ENCODE measurements at regions of chr4 and their contacts with region 1.

Region 1: DNA sequence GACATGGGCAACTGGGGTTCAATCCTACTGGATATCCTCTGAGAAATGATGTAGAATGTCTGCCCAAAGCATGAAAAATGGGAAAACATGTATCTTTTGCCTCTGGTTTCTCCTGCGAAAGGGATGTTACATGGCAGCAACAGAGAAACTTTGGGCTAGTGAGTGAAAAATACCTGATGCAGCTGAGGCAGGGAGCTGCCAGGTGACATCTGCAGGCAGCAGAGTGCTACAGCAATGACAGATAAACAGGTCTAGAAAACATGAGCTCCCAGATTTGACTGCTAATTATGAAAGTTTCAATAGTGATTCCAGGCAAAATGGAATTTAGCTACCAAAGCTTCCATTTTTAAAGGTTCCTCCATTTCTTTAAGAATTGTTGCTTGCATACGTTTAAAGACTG is 4.8 kb upstream of the CXCL1 start:
- DNase-seq: peak; percentile 18
- H3K4me3 ChIP-seq: no peak overlapping the region
- H3K27ac ChIP-seq: no peak overlapping the region
- H3K4me1 ChIP-seq: peaks cover 8% of the 10 kb centered on the region
- H3K27me3 ChIP-seq: no peaks in the 10 kb centered on the region
- CTCF ChIP-seq: peak; percentile 10 to 31
- POLR2A ChIP-seq: no peak

Region 2: DNA sequence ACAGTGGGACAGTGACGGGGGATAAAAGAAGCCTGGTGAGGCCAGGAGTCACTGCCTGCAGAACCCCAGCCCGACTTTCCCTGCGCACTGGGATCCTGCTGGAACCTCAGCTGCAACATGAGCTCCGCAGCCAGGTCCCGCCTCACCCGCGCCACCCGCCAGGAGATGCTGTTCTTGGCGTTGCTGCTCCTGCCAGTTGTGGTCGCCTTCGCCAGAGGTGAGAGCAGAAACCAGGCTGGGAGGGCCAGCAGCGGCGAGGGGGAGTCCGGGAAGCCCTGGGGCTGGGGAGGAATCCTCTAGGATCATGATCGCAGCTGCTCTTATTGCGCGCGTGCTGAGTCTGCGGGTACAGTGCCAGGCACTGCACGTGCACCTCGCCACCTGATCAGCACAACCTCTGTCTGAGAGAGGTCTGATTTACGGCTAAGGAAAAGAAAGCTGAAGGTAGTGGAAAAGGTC is 11.1 kb before region 1 on chr4 and contains the start of gene PF4V1:
- CTCF ChIA-PET with region 1: interaction called, 15 read pairs
- POLR2A ChIA-PET with region 1: interaction called, 5 read pairs
- dilution Hi-C with region 1: no loop called
- intact Hi-C with region 1: no loop called
- DNase-seq: peak; percentile 13
- H3K4me3 ChIP-seq: peak within 1 kb of the TSS in 1 of 3 experiments; percentile 2
- H3K27ac ChIP-seq: no peak within 1 kb of the TSS
- H3K4me1 ChIP-seq: peaks cover 11% of the 10 kb centered on the region
- H3K27me3 ChIP-seq: no peaks in the 10 kb centered on the region
- CTCF ChIP-seq: peak; percentile 14 to 45
- POLR2A ChIP-seq: no peak
- total RNA-seq, gene PF4V1: not detected in 2 replicates

Region 3: GRCh38 chr4:73998040-73999011 is 134.0 kb after region 1 on chr4 and contains the start of gene CXCL5:
- CTCF ChIA-PET with region 1: no interaction called
- POLR2A ChIA-PET with region 1: no interaction called
- dilution Hi-C with region 1: no loop called
- intact Hi-C with region 1: no loop called
- DNase-seq: peak; percentile 41
- H3K4me3 ChIP-seq: peak within 1 kb of the TSS; percentile 13 to 44 (median 40)
- H3K27ac ChIP-seq: no peak within 1 kb of the TSS
- H3K4me1 ChIP-seq: peaks cover 10% of the 10 kb centered on the region
- H3K27me3 ChIP-seq: no peaks in the 10 kb centered on the region
- CTCF ChIP-seq: peak in 1 of 2 donors; percentile 31
- POLR2A ChIP-seq: no peak
- total RNA-seq, gene CXCL5: 0.21 and 0.33 TPM in 2 replicates

Region 4: DNA sequence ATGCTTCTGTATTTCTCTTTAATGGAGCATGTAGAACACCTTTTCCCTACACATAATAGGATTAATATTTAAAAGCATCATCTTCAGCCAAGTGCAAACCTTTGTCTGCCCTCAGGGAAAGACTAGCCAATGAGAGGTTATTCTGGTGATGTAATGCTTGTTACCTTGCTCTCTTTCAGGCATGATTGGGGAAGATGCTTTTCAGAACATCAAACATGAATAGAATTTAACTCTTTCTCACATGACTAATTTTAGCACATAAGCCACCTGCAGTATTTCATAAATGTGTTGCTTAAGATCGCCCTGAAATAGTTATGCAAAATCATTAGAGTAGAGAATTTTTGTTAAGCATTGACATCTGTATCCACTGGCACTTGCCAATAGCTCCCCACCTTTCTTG is 433.2 kb after region 1 on chr4:
- CTCF ChIA-PET with region 1: no interaction called
- POLR2A ChIA-PET with region 1: no interaction called
- dilution Hi-C with region 1: no loop called
- intact Hi-C with region 1: no loop called
- DNase-seq: no peak
- H3K4me3 ChIP-seq: no peak overlapping the region
- H3K27ac ChIP-seq: no peak overlapping the region
- H3K4me1 ChIP-seq: no peaks in the 10 kb centered on the region
- H3K27me3 ChIP-seq: no peaks in the 10 kb centered on the region
- CTCF ChIP-seq: no peak
- POLR2A ChIP-seq: no peak

Measured in endothelial cell of umbilical vein (primary cell).